Endothelial cell of umbilical vein (primary cell): ENCODE measurements at regions of chr5 and their contacts with region 1.

Region 1: DNA sequence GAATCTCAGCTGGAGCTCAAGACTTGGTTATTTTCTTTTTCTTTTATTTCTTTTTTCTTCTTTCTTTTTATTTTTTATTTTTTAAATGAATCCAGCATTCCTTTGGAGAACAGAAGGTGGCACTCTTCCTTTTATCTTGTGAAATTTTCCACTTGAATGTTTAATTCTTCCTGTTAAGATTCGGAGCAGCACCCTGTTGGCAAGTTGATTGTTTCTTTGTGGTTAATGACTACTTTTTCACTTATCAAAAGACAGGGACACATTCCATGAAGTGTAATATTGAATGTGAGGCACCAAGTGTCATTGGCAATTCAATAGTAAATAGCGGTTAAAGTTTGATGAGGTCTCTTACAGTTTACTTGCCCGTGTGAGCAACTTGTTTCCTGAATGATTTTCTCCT is 240.5 kb upstream of the CHD1 start:
- DNase-seq: peak; percentile 70
- H3K4me3 ChIP-seq: no peak overlapping the region
- H3K27ac ChIP-seq: no peak overlapping the region
- H3K4me1 ChIP-seq: peaks cover 5% of the 10 kb centered on the region
- H3K27me3 ChIP-seq: no peaks in the 10 kb centered on the region
- CTCF ChIP-seq: peak in 1 of 2 donors; percentile 34
- POLR2A ChIP-seq: no peak

Region 2: DNA sequence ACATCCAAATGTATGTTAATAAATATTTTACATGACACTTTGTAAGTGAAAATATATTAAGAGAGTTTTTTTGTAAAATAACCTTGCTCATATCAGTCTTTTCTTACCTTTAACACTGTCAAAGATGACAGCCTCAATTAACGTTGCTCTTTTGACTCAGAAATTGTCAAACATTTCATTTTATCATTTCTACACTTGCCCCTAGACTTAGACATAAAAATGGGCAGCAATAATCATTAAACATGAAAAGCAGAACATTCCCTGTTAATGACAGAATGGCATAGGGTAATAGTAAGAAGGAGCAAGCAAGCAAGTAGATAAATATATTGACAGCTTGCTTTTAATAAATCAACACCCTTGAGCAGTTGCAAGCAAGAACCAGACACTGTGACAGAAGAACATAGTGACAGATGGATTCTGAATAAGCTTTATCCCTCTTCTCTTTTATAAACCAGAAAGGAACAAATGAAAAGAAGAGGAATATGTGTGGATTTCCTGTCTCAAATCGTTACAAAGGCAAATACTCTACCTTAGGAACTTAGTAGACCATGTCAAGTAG is 555.5 kb after region 1 on chr5:
- CTCF ChIA-PET with region 1: no interaction called
- POLR2A ChIA-PET with region 1: no interaction called
- dilution Hi-C with region 1: no loop called
- intact Hi-C with region 1: loop called (anchors 5 kb)
- DNase-seq: no peak
- H3K4me3 ChIP-seq: no peak overlapping the region
- H3K27ac ChIP-seq: no peak overlapping the region
- H3K4me1 ChIP-seq: no peaks in the 10 kb centered on the region
- H3K27me3 ChIP-seq: no peaks in the 10 kb centered on the region
- CTCF ChIP-seq: no peak
- POLR2A ChIP-seq: no peak

Region 3: DNA sequence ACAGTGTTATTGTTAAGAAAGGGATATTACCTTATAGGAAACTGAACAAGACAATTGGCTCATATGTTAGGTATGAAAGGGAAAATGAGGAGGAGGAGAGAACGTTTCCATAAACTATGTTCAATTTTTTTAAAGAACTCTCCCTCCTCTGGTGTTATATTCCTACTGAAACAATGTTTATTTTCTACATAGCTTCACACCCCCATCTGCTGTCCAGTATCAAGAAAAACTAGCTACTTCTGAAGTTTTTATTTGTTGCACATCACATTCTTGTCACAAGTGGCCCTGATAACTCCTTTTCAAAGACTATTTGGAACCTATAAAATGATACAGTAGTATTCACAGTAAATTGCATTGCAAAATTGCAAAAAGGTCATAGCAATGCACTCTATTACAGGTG is 1142.5 kb after region 1 on chr5:
- CTCF ChIA-PET with region 1: interaction called, 32 read pairs
- POLR2A ChIA-PET with region 1: no interaction called
- dilution Hi-C with region 1: no loop called
- intact Hi-C with region 1: loop called (anchors 1 kb)
- DNase-seq: peak; percentile 71
- H3K4me3 ChIP-seq: no peak overlapping the region
- H3K27ac ChIP-seq: no peak overlapping the region
- H3K4me1 ChIP-seq: no peaks in the 10 kb centered on the region
- H3K27me3 ChIP-seq: no peaks in the 10 kb centered on the region
- CTCF ChIP-seq: no peak
- POLR2A ChIP-seq: no peak